Activated CD4-positive, alpha-beta memory T cell treated with anti-CD3 and anti-CD28 coated beads for 36 hours (primary cell): ENCODE measurements at regions of chr5 and their contacts with region 1.

Region 1: GRCh38 chr5:42908509-42909488 is 97.1 kb upstream of the SELENOP start:
- DNase-seq: peak; percentile 93
- H3K4me3 Mint-ChIP-seq: peak overlapping the region; percentile 82
- H3K27ac Mint-ChIP-seq: peak overlapping the region; percentile 70
- H3K4me1 Mint-ChIP-seq: peaks cover 10% of the 10 kb centered on the region
- H3K27me3 Mint-ChIP-seq: peaks cover 10% of the 10 kb centered on the region

Region 2: GRCh38 chr5:42787845-42788244 is 121.0 kb before region 1 on chr5:
- CTCF ChIA-PET with region 1: no interaction called
- POLR2A ChIA-PET with region 1: no interaction called
- intact Hi-C with region 1: no loop called
- DNase-seq: no peak
- H3K4me3 Mint-ChIP-seq: no peak overlapping the region
- H3K27ac Mint-ChIP-seq: no peak overlapping the region
- H3K4me1 Mint-ChIP-seq: no peaks in the 10 kb centered on the region
- H3K27me3 Mint-ChIP-seq: no peaks in the 10 kb centered on the region

Region 3: DNA sequence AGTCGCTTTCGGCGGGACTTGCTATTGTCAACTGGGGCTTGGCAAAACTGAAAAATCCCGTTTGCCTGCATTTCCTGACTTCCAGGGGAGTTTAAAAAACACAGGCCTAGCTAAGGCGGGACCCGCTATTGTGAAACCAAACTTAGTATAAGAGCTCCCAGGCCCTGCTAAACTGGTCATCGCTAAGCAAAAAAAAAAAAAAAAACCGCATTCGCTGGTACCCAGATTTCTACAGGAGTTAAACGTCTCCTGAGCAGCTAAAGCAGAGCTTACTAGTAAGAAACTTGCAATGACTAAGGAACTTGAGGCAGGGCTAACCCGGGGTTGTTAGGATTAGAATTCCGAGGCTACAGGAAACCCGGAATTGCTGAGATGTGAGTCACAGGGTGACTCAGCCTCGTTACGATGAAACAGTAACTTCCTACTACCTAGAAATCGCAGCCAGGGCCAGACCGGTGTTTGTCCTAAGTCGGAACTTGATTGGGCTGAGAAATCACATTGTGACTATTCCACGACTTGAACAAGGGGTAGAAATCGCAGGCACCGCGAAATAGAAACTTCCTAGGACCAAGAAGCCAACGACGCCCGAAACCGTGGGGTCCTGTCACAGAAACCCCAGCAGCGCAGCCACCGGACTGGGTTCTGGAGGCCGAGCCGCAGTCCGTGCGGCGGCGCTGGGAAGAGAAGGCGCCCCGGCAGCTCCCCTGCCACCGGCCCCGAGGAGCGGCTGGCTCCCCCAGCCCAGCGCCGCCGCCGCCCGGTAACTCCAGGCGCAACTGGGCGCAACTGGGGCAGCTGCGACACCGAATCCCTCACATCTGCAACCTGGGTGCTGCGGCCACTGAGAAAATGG is 41.9 kb after region 1 on chr5:
- CTCF ChIA-PET with region 1: interaction called, 50 read pairs
- POLR2A ChIA-PET with region 1: interaction called, 8 read pairs
- intact Hi-C with region 1: loop called (anchors 1 kb)
- DNase-seq: peak; percentile 86
- H3K4me3 Mint-ChIP-seq: peak overlapping the region; percentile 94
- H3K27ac Mint-ChIP-seq: peak overlapping the region; percentile 97
- H3K4me1 Mint-ChIP-seq: peaks cover 30% of the 10 kb centered on the region
- H3K27me3 Mint-ChIP-seq: no peaks in the 10 kb centered on the region

Region 4: GRCh38 chr5:42985129-42986037 is 76.6 kb after region 1 on chr5:
- CTCF ChIA-PET with region 1: interaction called, 33 read pairs
- POLR2A ChIA-PET with region 1: no interaction called
- intact Hi-C with region 1: no loop called
- DNase-seq: no peak
- H3K4me3 Mint-ChIP-seq: no peak overlapping the region
- H3K27ac Mint-ChIP-seq: no peak overlapping the region
- H3K4me1 Mint-ChIP-seq: peaks cover 49% of the 10 kb centered on the region
- H3K27me3 Mint-ChIP-seq: no peaks in the 10 kb centered on the region

Region 5: GRCh38 chr5:43008369-43009153 is 99.8 kb after region 1 on chr5:
- CTCF ChIA-PET with region 1: interaction called, 18 read pairs
- POLR2A ChIA-PET with region 1: interaction called, 3 read pairs
- intact Hi-C with region 1: no loop called
- DNase-seq: peak; percentile 93
- H3K4me3 Mint-ChIP-seq: peak overlapping the region; percentile 81
- H3K27ac Mint-ChIP-seq: peak overlapping the region; percentile 88
- H3K4me1 Mint-ChIP-seq: peaks cover 26% of the 10 kb centered on the region
- H3K27me3 Mint-ChIP-seq: no peaks in the 10 kb centered on the region

Region 6: DNA sequence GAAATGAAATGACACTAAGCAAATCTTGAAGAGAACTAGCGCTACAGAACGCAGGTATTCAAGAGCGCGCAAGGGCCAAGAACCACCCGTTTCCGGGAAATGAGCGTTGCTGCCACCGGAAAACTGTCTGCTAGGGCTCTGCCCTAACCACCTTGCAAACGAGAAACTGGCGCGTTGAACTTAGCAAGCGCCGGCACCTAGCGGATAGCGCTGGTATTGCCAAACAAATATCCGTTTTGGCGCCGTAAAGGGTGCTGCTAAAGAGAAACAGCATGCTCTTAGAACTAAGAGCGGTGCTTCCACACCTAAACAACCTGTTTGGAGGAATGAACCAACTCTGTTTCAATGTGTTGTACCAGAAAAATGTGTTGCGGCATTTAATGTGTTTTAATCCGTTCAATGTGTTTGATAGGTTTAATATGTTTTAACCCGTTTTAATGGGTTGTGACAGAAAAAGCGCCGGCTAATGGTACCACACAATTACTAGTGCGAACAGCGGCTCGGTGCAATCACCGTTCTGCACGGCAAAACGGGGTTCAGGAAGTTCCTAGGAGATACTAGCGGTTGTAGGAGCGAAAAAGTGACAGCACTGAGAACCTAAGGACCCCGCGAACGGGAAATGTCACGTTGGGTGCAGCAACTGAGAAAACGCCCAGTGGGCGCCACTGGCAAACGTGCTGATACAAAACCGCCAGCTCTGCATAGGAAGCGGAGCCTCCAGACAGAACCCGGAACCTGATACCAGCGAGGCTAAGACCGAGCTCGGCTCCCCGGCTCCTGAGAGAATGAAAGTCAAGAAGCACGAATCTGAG is 131.7 kb after region 1 on chr5 and contains the start of gene ANXA2R:
- CTCF ChIA-PET with region 1: interaction called, 33 read pairs
- POLR2A ChIA-PET with region 1: interaction called, 7 read pairs
- intact Hi-C with region 1: loop called (anchors 1 kb)
- DNase-seq: peak; percentile 97
- H3K4me3 Mint-ChIP-seq: peak within 1 kb of the TSS; percentile 94
- H3K27ac Mint-ChIP-seq: peak within 1 kb of the TSS; percentile 96
- H3K4me1 Mint-ChIP-seq: peaks cover 41% of the 10 kb centered on the region
- H3K27me3 Mint-ChIP-seq: no peaks in the 10 kb centered on the region
- total RNA-seq, gene ANXA2R: 2.8 to 3.8 TPM